Activated CD4-positive, alpha-beta memory T cell treated with anti-CD3 and anti-CD28 coated beads for 36 hours (primary cell): ENCODE measurements at regions of chr14 and their contacts with region 1.

Region 1: DNA sequence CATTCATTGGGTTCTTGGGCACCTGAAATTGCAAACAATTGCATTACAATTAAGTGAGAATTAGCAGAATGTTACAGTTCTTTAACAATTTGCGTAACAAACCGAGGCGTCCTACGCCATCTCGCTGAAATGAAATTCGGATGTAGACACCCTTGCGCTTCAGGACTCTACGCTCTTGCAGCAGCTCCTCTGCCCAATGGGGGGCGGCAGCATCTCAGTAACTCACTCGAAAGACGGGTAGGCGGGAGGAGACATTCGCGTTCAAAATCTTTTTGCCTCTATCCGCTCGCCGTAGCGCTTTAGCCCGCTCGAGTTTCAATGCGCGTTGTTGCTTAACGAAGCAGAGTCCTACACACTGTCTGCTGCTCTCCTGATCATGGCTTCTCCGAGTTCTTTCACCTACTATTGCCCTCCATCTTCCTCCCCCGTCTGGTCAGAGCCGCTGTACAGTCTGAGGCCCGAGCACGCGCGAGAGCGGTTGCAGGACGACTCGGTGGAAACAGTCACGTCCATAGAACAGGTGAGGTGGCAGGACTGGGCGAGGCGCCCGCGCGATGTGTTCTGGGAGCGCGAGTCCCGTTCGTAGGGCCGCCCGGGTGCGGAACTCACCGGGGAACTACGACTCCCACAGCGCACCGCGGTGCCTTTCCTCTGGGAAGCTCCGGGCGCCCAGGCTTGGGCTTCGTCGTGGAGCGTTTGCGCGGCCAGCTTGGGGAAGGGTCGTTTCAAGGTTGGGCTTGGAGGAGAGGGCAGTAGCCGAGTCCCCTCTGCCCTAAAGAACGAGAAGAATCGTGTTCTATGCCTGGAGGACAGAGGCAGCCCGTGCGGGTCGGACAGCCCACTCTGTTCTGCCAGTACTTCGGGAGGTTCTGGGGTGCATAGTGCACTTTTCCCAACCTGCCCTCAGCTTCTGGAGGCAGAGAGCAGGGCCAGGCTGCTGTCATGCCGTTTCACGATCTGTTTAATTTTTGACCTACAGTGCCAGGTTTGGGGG is at the start of gene FNTB:
- DNase-seq: peak; percentile 95
- H3K4me3 Mint-ChIP-seq: peak within 1 kb of the TSS; percentile 98
- H3K27ac Mint-ChIP-seq: peak within 1 kb of the TSS; percentile 98
- H3K4me1 Mint-ChIP-seq: peaks cover 39% of the 10 kb centered on the region
- H3K27me3 Mint-ChIP-seq: no peaks in the 10 kb centered on the region
- total RNA-seq, gene FNTB: 8.8 to 12.3 TPM

Region 2: GRCh38 chr14:64764641-64765520 is 222.0 kb before region 1 on chr14:
- CTCF ChIA-PET with region 1: interaction called, 3 read pairs
- POLR2A ChIA-PET with region 1: no interaction called
- intact Hi-C with region 1: loop called (anchors 5 kb)
- DNase-seq: peak; percentile 80
- H3K4me3 Mint-ChIP-seq: peak overlapping the region; percentile 49
- H3K27ac Mint-ChIP-seq: no peak overlapping the region
- H3K4me1 Mint-ChIP-seq: peaks cover 55% of the 10 kb centered on the region
- H3K27me3 Mint-ChIP-seq: no peaks in the 10 kb centered on the region

Region 3: DNA sequence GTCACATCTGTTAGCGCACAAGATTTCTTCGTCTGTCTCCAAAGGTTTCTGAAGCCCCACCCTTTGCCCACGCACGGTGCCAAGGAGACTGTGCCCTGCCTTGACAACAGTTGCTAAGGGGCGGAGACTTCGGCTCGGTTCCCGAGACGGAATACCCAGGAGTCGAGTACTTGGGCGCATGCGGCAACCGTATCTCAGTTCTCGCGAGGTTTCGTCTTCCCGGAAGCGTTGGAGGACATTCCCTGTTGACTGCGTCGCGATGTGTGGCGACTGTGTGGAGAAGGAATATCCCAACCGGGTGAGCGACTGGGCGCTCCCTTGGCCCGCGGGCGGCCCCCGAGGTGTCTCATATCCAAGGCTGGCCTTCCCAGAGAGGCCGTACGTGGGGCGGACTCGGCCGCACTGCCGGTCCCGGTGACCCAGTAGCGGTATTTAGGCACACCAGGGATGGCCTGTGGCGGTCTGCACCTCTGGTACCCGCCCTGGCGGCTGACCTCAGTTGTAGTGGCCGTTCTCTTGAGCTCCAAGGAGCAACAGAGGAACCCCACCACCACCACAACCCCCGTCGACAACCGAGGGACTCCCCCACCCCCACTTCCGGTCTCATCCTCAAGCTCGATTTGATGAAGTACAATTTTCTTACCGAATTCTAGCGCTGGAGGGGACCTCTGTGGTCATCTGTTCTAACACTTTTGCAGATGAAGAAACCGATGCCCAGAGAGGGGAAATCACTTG is 72.5 kb before region 1 on chr14 and contains the start of gene CHURC1:
- CTCF ChIA-PET with region 1: interaction called, 4 read pairs
- POLR2A ChIA-PET with region 1: interaction called, 3 read pairs
- intact Hi-C with region 1: loop called (anchors 2 kb)
- DNase-seq: peak; percentile 98
- H3K4me3 Mint-ChIP-seq: peak within 1 kb of the TSS; percentile 78
- H3K27ac Mint-ChIP-seq: peak within 1 kb of the TSS; percentile 90
- H3K4me1 Mint-ChIP-seq: peaks cover 44% of the 10 kb centered on the region
- H3K27me3 Mint-ChIP-seq: peaks cover 3% of the 10 kb centered on the region
- total RNA-seq, gene CHURC1: 61.7 to 62.6 TPM

Region 4: GRCh38 chr14:65019944-65020566 is 33.2 kb after region 1 on chr14:
- CTCF ChIA-PET with region 1: interaction called, 30 read pairs
- POLR2A ChIA-PET with region 1: no interaction called
- intact Hi-C with region 1: loop called (anchors 1 kb)
- DNase-seq: no peak
- H3K4me3 Mint-ChIP-seq: no peak overlapping the region
- H3K27ac Mint-ChIP-seq: no peak overlapping the region
- H3K4me1 Mint-ChIP-seq: no peaks in the 10 kb centered on the region
- H3K27me3 Mint-ChIP-seq: no peaks in the 10 kb centered on the region

Region 5: GRCh38 chr14:65035049-65035448 is 48.2 kb after region 1 on chr14:
- CTCF ChIA-PET with region 1: no interaction called
- POLR2A ChIA-PET with region 1: no interaction called
- intact Hi-C with region 1: no loop called
- DNase-seq: no peak
- H3K4me3 Mint-ChIP-seq: no peak overlapping the region
- H3K27ac Mint-ChIP-seq: no peak overlapping the region
- H3K4me1 Mint-ChIP-seq: no peaks in the 10 kb centered on the region
- H3K27me3 Mint-ChIP-seq: no peaks in the 10 kb centered on the region

Region 6: GRCh38 chr14:65164068-65164824 is 177.4 kb after region 1 on chr14:
- CTCF ChIA-PET with region 1: interaction called, 3 read pairs
- POLR2A ChIA-PET with region 1: no interaction called
- intact Hi-C with region 1: loop called (anchors 5 kb)
- DNase-seq: peak; percentile 36
- H3K4me3 Mint-ChIP-seq: no peak overlapping the region
- H3K27ac Mint-ChIP-seq: no peak overlapping the region
- H3K4me1 Mint-ChIP-seq: peaks cover 5% of the 10 kb centered on the region
- H3K27me3 Mint-ChIP-seq: no peaks in the 10 kb centered on the region

Region 7: DNA sequence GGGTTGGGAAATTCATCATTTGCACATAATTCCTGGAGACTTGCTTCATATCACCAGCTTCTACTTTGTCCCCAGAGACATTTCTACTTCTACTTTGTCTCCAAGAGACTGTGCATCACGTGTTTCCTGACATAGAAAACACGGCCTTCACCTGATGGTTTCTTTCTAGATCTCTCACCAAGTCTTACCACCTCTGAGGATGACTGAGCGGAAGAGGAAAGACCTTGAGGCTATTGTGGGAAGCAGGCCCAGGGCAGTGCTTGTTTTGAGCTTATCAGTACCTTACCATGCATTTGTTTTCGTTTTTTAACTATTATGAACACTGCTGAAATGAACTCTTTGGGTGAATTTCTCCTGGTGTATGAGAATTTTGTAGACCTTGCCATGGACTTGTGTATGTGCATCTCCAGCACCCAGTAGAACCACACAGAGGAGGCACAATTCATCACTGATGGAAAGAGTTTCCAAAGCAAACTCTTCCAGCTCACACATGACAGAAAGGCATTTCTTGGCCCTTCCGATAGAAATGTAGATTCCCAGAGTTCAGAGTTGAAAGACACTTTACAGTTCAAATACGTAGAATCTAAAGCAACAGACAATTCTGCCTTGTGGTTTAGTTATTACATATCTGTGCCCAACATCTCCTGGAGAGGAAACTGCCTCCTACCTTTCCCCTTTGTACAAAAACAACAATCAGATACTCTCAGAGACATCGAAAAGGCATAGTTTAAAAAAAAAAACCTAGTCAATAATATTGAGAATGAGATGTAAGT is 860.4 kb after region 1 on chr14:
- CTCF ChIA-PET with region 1: no interaction called
- POLR2A ChIA-PET with region 1: no interaction called
- intact Hi-C with region 1: loop called (anchors 10 kb)
- DNase-seq: peak; percentile 86
- H3K4me3 Mint-ChIP-seq: peak overlapping the region; percentile 22
- H3K27ac Mint-ChIP-seq: peak overlapping the region; percentile 79
- H3K4me1 Mint-ChIP-seq: peaks cover 66% of the 10 kb centered on the region
- H3K27me3 Mint-ChIP-seq: no peaks in the 10 kb centered on the region